MCF 10A (cell line): ENCODE measurements at regions of chr2 and their contacts with region 1.

Region 1: DNA sequence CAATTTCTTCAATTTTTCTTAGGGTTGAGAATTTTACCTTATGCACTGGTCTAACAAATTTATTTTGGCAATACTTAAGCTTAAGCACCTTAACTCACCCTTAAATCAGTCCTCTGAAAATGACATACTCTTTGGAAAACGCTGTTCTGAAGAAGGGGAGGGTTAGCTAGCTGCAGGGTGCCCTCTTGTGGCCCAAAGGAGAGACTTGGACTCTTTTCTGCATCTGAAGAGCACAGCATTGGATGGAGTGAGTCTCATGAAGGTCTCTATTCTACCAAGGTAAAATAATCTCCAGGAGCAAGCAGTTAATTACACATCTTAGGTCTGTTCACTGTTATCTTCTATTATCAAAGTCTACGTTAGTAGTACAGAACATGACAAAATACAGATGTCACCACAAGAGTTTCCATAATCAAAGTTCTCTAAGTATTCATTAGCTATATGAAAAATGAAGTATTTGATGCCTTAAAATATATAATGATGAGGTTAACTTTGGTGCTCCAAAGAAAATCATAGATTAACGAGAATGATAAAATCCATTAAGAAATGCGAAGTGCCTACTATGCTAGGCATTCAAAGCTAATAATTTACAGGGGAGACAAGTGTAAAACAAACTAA is 24.4 kb downstream of the PUM2 start:
- DNase-seq: peak; percentile 71
- H3K4me3 Mint-ChIP-seq: no peak overlapping the region
- H3K27ac Mint-ChIP-seq: peak overlapping the region; percentile 39
- H3K4me1 Mint-ChIP-seq: peaks cover 8% of the 10 kb centered on the region
- H3K27me3 Mint-ChIP-seq: no peaks in the 10 kb centered on the region
- CTCF ChIP-seq: peak; percentile 78

Region 2: GRCh38 chr2:20282916-20283592 is 43.2 kb before region 1 on chr2:
- CTCF ChIA-PET with region 1: interaction called, 10 read pairs
- POLR2A ChIA-PET with region 1: no interaction called
- intact Hi-C with region 1: no loop called
- DNase-seq: no peak
- H3K4me3 Mint-ChIP-seq: no peak overlapping the region
- H3K27ac Mint-ChIP-seq: no peak overlapping the region
- H3K4me1 Mint-ChIP-seq: no peaks in the 10 kb centered on the region
- H3K27me3 Mint-ChIP-seq: no peaks in the 10 kb centered on the region
- CTCF ChIP-seq: no peak

Region 3: GRCh38 chr2:20299113-20299512 is 27.2 kb before region 1 on chr2:
- CTCF ChIA-PET with region 1: interaction called, 18 read pairs
- POLR2A ChIA-PET with region 1: interaction called, 4 read pairs
- intact Hi-C with region 1: no loop called
- DNase-seq: no peak
- H3K4me3 Mint-ChIP-seq: no peak overlapping the region
- H3K27ac Mint-ChIP-seq: no peak overlapping the region
- H3K4me1 Mint-ChIP-seq: peaks cover 9% of the 10 kb centered on the region
- H3K27me3 Mint-ChIP-seq: no peaks in the 10 kb centered on the region
- CTCF ChIP-seq: no peak

Region 4: DNA sequence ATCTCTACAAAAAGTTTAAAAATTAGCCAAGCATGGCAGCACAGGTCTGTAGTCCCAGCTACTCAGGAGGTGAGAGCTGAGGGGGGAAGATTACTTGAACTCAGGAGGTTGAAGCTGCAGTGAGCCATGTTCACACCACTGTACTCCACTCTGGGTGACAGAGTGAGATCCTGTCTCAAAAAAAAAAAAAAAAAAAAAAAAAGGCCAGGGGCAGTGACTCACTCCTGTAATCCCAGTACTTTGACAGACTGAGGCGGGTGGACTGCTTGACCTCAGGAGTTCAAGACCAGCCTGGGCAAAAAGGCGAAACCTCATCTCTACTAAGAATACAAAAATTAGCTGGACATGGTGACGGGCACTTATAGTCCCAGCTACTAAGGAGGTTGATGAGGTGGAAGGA is 12.6 kb before region 1 on chr2:
- CTCF ChIA-PET with region 1: interaction called, 56 read pairs
- POLR2A ChIA-PET with region 1: interaction called, 5 read pairs
- intact Hi-C with region 1: no loop called
- DNase-seq: peak; percentile 26
- H3K4me3 Mint-ChIP-seq: no peak overlapping the region
- H3K27ac Mint-ChIP-seq: no peak overlapping the region
- H3K4me1 Mint-ChIP-seq: no peaks in the 10 kb centered on the region
- H3K27me3 Mint-ChIP-seq: no peaks in the 10 kb centered on the region
- CTCF ChIP-seq: no peak

Region 5: GRCh38 chr2:20350753-20351554 is 24.7 kb after region 1 on chr2 and contains the start of gene PUM2:
- CTCF ChIA-PET with region 1: interaction called, 14 read pairs
- POLR2A ChIA-PET with region 1: interaction called, 13 read pairs
- intact Hi-C with region 1: loop called (anchors 2 kb)
- DNase-seq: peak; percentile 96
- H3K4me3 Mint-ChIP-seq: no peak within 1 kb of the TSS
- H3K27ac Mint-ChIP-seq: no peak within 1 kb of the TSS
- H3K4me1 Mint-ChIP-seq: peaks cover 20% of the 10 kb centered on the region
- H3K27me3 Mint-ChIP-seq: no peaks in the 10 kb centered on the region
- CTCF ChIP-seq: no peak
- total RNA-seq, gene PUM2: 86.7 and 94.0 TPM in 2 replicates

Region 6: GRCh38 chr2:20398956-20399567 is 72.8 kb after region 1 on chr2:
- CTCF ChIA-PET with region 1: interaction called, 11 read pairs
- POLR2A ChIA-PET with region 1: no interaction called
- intact Hi-C with region 1: no loop called
- DNase-seq: no peak
- H3K4me3 Mint-ChIP-seq: no peak overlapping the region
- H3K27ac Mint-ChIP-seq: no peak overlapping the region
- H3K4me1 Mint-ChIP-seq: peaks cover 25% of the 10 kb centered on the region
- H3K27me3 Mint-ChIP-seq: no peaks in the 10 kb centered on the region
- CTCF ChIP-seq: no peak

Region 7: GRCh38 chr2:20642055-20642971 is 316.0 kb after region 1 on chr2:
- CTCF ChIA-PET with region 1: interaction called, 34 read pairs
- POLR2A ChIA-PET with region 1: no interaction called
- intact Hi-C with region 1: no loop called
- DNase-seq: peak; percentile 70
- H3K4me3 Mint-ChIP-seq: no peak overlapping the region
- H3K27ac Mint-ChIP-seq: no peak overlapping the region
- H3K4me1 Mint-ChIP-seq: peaks cover 17% of the 10 kb centered on the region
- H3K27me3 Mint-ChIP-seq: no peaks in the 10 kb centered on the region
- CTCF ChIP-seq: peak; percentile 91